BJ (cell line): ENCODE measurements at regions of chr10 and their contacts with region 1.

Region 1: GRCh38 chr10:34739915-34740314 is 75.2 kb downstream of the PARD3 start:
- DNase-seq: peak; percentile 57
- H3K4me3 ChIP-seq: peak overlapping the region; percentile 15
- H3K27me3 ChIP-seq: no peaks in the 10 kb centered on the region
- CTCF ChIP-seq: no peak

Region 2: GRCh38 chr10:34655286-34656170 is 84.4 kb before region 1 on chr10:
- CTCF ChIA-PET with region 1: no interaction called
- POLR2A ChIA-PET with region 1: no interaction called
- DNase-seq: peak; percentile 41
- H3K4me3 ChIP-seq: no peak overlapping the region
- H3K27me3 ChIP-seq: no peaks in the 10 kb centered on the region
- CTCF ChIP-seq: peak; percentile 76

Region 3: DNA sequence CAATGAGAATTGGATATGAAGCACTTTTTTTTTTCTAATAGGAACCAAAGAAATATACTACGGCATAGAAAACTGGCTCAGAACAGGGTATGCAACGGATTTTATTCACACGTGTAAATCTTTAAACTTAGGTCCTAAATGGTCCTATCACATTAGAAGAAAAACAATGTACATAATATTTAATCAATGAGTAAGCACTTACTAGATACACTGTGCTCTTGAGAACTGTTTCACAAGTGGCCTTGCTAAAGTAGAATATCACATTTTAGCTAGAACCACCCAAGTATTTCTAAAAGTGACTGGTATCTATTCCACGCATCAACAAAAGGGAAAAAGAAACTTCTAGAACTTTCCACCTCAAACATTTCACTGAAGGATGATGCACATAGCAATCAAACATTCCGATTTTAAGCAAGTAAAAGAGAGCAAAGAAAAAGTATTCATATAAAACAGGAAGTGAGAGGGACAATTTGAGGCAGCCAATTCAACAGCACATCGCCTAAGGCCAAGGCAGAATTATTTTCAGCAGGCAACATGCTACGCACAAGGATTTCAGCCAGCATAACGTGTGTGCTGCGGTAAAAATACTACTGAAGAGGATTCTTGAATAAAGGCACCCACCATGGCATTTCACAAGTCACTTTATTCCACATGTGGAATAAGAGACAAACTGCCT is 19.4 kb after region 1 on chr10:
- CTCF ChIA-PET with region 1: interaction called, 3 read pairs
- POLR2A ChIA-PET with region 1: interaction called, 10 read pairs
- DNase-seq: no peak
- H3K4me3 ChIP-seq: no peak overlapping the region
- H3K27me3 ChIP-seq: no peaks in the 10 kb centered on the region
- CTCF ChIP-seq: no peak

Region 4: GRCh38 chr10:35517431-35518181 is 777.7 kb after region 1 on chr10:
- CTCF ChIA-PET with region 1: no interaction called
- POLR2A ChIA-PET with region 1: no interaction called
- DNase-seq: no peak
- H3K4me3 ChIP-seq: no peak overlapping the region
- H3K27me3 ChIP-seq: no peaks in the 10 kb centered on the region
- CTCF ChIP-seq: no peak